GM12878 (cell line): ENCODE measurements at regions of chr9 and their contacts with region 1.

Region 1: GRCh38 chr9:126965541-126966428 is 51.2 kb downstream of the RALGPS1 start:
- DNase-seq: no peak
- ATAC-seq: peak; percentile 99
- H3K4me3 ChIP-seq: no peak overlapping the region
- H3K27ac ChIP-seq: no peak overlapping the region
- H3K4me1 ChIP-seq: no peaks in the 10 kb centered on the region
- H3K27me3 ChIP-seq: no peaks in the 10 kb centered on the region
- CTCF ChIP-seq: peak; percentile 82 to 84 (median 83)
- EP300 ChIP-seq: no peak
- POLR2A ChIP-seq: no peak
- RAD21 ChIP-seq: peak; percentile 95

Region 2: GRCh38 chr9:126939821-126940221 is 26.0 kb before region 1 on chr9:
- CTCF ChIA-PET with region 1: interaction called, 49 read pairs
- POLR2A ChIA-PET with region 1: no interaction called
- RAD21 ChIA-PET with region 1: interaction called, 23 read pairs
- SMC1A ChIA-PET with region 1: interaction called, 21 read pairs
- in situ Hi-C with region 1: no loop called
- intact Hi-C with region 1: no loop called
- DNase-seq: no peak
- ATAC-seq: no peak
- H3K4me3 ChIP-seq: no peak overlapping the region
- H3K27ac ChIP-seq: no peak overlapping the region
- H3K4me1 ChIP-seq: no peaks in the 10 kb centered on the region
- H3K27me3 ChIP-seq: no peaks in the 10 kb centered on the region
- CTCF ChIP-seq: no peak
- EP300 ChIP-seq: no peak
- POLR2A ChIP-seq: no peak
- RAD21 ChIP-seq: no peak

Region 3: GRCh38 chr9:127004946-127005769 is 39.4 kb after region 1 on chr9:
- CTCF ChIA-PET with region 1: interaction called, 4 read pairs
- POLR2A ChIA-PET with region 1: interaction called, 3 read pairs
- RAD21 ChIA-PET with region 1: interaction called, 10 read pairs
- SMC1A ChIA-PET with region 1: interaction called, 13 read pairs
- in situ Hi-C with region 1: no loop called
- intact Hi-C with region 1: no loop called
- DNase-seq: peak; percentile 98
- ATAC-seq: peak; percentile 85
- H3K4me3 ChIP-seq: peak overlapping the region; percentile 4; the same call in 1 of the 2 replicates
- H3K27ac ChIP-seq: peak overlapping the region; percentile 77
- H3K4me1 ChIP-seq: peaks cover 54% of the 10 kb centered on the region
- H3K27me3 ChIP-seq: no peaks in the 10 kb centered on the region
- CTCF ChIP-seq: no peak
- EP300 ChIP-seq: peak; percentile 99
- POLR2A ChIP-seq: no peak
- RAD21 ChIP-seq: peak; percentile 32

Region 4: DNA sequence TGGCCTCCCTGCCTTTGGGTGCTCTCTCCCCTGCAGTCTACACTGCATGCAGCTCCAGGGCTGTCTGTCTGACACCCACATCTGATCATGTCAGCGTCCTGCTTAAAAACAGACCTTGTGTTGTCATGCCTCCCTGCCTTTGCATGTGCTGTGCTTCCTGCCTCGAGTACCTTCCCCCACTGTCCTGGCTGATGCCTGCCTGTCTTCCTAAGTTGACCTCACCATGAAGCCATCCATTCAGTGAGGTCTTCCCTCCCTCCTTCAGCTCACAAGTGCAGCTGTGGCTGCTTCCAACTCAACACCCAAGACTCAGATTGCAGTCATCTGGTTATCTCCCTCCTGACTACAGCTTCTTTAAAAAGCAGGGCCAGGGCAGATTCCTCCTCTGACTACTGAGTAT is 151.2 kb after region 1 on chr9:
- CTCF ChIA-PET with region 1: interaction called, 15 read pairs
- POLR2A ChIA-PET with region 1: no interaction called
- RAD21 ChIA-PET with region 1: interaction called, 7 read pairs
- SMC1A ChIA-PET with region 1: interaction called, 7 read pairs
- in situ Hi-C with region 1: no loop called
- intact Hi-C with region 1: no loop called
- DNase-seq: no peak
- ATAC-seq: peak; percentile 50
- H3K4me3 ChIP-seq: no peak overlapping the region
- H3K27ac ChIP-seq: no peak overlapping the region
- H3K4me1 ChIP-seq: peaks cover 21% of the 10 kb centered on the region
- H3K27me3 ChIP-seq: no peaks in the 10 kb centered on the region
- CTCF ChIP-seq: no peak
- EP300 ChIP-seq: no peak
- POLR2A ChIP-seq: no peak
- RAD21 ChIP-seq: 0 out of 2 replicates have a peak, but pooled peaks have one; percentile 0

Region 5: GRCh38 chr9:127172026-127172707 is 206.4 kb after region 1 on chr9:
- CTCF ChIA-PET with region 1: interaction called, 22 read pairs
- POLR2A ChIA-PET with region 1: interaction called, 3 read pairs
- RAD21 ChIA-PET with region 1: interaction called, 30 read pairs
- SMC1A ChIA-PET with region 1: interaction called, 71 read pairs
- in situ Hi-C with region 1: no loop called
- intact Hi-C with region 1: loop called (anchors 1 kb)
- DNase-seq: no peak
- ATAC-seq: no peak
- H3K4me3 ChIP-seq: no peak overlapping the region
- H3K27ac ChIP-seq: no peak overlapping the region
- H3K4me1 ChIP-seq: peaks cover 6% of the 10 kb centered on the region
- H3K27me3 ChIP-seq: no peaks in the 10 kb centered on the region
- CTCF ChIP-seq: no peak
- EP300 ChIP-seq: no peak
- POLR2A ChIP-seq: no peak
- RAD21 ChIP-seq: no peak